ENCODE measurements at regions of chr7 and their contacts with region 1.

Region 1: GRCh38 chr7:92691578-92691977 is 101.4 kb upstream of the FAM133B start:
- DNase-seq: peak in 1 of 2 experiments; percentile 60
- H3K4me3 ChIP-seq: no peak overlapping the region
- H3K4me3 Mint-ChIP-seq: no peak overlapping the region
- H3K27ac Mint-ChIP-seq: peak overlapping the region; percentile 89
- H3K4me1 ChIP-seq: peaks cover 40% of the 10 kb centered on the region
- H3K4me1 Mint-ChIP-seq: peaks cover 20% of the 10 kb centered on the region
- H3K27me3 ChIP-seq: no peaks in the 10 kb centered on the region
- H3K27me3 Mint-ChIP-seq: no peaks in the 10 kb centered on the region
- CTCF ChIP-seq: peak; percentile 59 to 62

Region 2: GRCh38 chr7:92645114-92646061 is 46.2 kb before region 1 on chr7:
- CTCF ChIA-PET with region 1: interaction called, 5 read pairs
- POLR2A ChIA-PET with region 1: no interaction called
- intact Hi-C with region 1: loop called (anchors 1 kb)
- DNase-seq: peak; percentile 67 to 81
- H3K4me3 ChIP-seq: no peak overlapping the region
- H3K4me3 Mint-ChIP-seq: peak overlapping the region; percentile 47
- H3K27ac Mint-ChIP-seq: peak overlapping the region; percentile 27
- H3K4me1 ChIP-seq: peaks cover 38% of the 10 kb centered on the region
- H3K4me1 Mint-ChIP-seq: peaks cover 13% of the 10 kb centered on the region
- H3K27me3 ChIP-seq: no peaks in the 10 kb centered on the region
- H3K27me3 Mint-ChIP-seq: no peaks in the 10 kb centered on the region
- CTCF ChIP-seq: no peak

Region 3: GRCh38 chr7:92740700-92741126 is 49.1 kb after region 1 on chr7:
- CTCF ChIA-PET with region 1: no interaction called
- POLR2A ChIA-PET with region 1: no interaction called
- intact Hi-C with region 1: loop called (anchors 1 kb)
- DNase-seq: peak; percentile 73
- H3K4me3 ChIP-seq: no peak overlapping the region
- H3K4me3 Mint-ChIP-seq: peak overlapping the region; percentile 55
- H3K27ac Mint-ChIP-seq: peak overlapping the region; percentile 48
- H3K4me1 ChIP-seq: peaks cover 51% of the 10 kb centered on the region
- H3K4me1 Mint-ChIP-seq: peaks cover 59% of the 10 kb centered on the region
- H3K27me3 ChIP-seq: no peaks in the 10 kb centered on the region
- H3K27me3 Mint-ChIP-seq: no peaks in the 10 kb centered on the region
- CTCF ChIP-seq: no peak

Region 4: GRCh38 chr7:92833024-92833765 is 141.6 kb after region 1 on chr7:
- CTCF ChIA-PET with region 1: interaction called, 30 read pairs
- POLR2A ChIA-PET with region 1: interaction called, 17 read pairs
- intact Hi-C with region 1: loop called (anchors 1 kb)
- DNase-seq: peak; percentile 91 to 94
- H3K4me3 ChIP-seq: peak overlapping the region; percentile 79
- H3K4me3 Mint-ChIP-seq: peak overlapping the region; percentile 86
- H3K27ac Mint-ChIP-seq: peak overlapping the region; percentile 77
- H3K4me1 ChIP-seq: peaks cover 24% of the 10 kb centered on the region
- H3K4me1 Mint-ChIP-seq: peaks cover 18% of the 10 kb centered on the region
- H3K27me3 ChIP-seq: no peaks in the 10 kb centered on the region
- H3K27me3 Mint-ChIP-seq: no peaks in the 10 kb centered on the region
- CTCF ChIP-seq: peak; percentile 91 to 93

Region 5: DNA sequence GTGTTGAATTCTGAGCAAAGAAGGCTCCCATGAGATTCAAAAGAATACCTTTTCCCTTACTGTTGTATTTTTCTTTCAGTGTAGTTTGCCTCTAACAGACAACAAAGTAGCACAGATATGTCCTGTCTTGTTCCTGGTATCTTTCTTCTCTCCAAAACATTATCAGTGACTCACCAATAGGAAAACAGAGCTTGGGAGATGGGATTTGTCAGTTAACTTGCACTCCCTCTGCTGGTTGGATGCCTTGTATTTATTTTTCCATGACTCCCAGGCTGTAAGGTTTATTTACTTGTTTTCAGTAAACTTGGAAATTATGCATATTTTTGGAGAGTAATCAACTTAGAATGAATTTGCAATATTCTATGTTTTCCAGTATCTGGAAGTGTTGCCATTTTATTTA is 296.5 kb after region 1 on chr7:
- CTCF ChIA-PET with region 1: no interaction called
- POLR2A ChIA-PET with region 1: no interaction called
- intact Hi-C with region 1: loop called (anchors 2 kb)
- DNase-seq: peak in 1 of 2 experiments; percentile 55
- H3K4me3 ChIP-seq: no peak overlapping the region
- H3K4me3 Mint-ChIP-seq: no peak overlapping the region
- H3K27ac Mint-ChIP-seq: peak overlapping the region; percentile 32
- H3K4me1 ChIP-seq: 0 out of 2 replicates have a peak, but pooled peaks cover 10% of the 10 kb centered on the region
- H3K4me1 Mint-ChIP-seq: peaks cover 11% of the 10 kb centered on the region
- H3K27me3 ChIP-seq: no peaks in the 10 kb centered on the region
- H3K27me3 Mint-ChIP-seq: peaks cover 3% of the 10 kb centered on the region
- CTCF ChIP-seq: peak; percentile 39 to 53

Region 6: GRCh38 chr7:93203487-93203886 is 511.9 kb after region 1 on chr7:
- CTCF ChIA-PET with region 1: no interaction called
- POLR2A ChIA-PET with region 1: no interaction called
- intact Hi-C with region 1: loop called (anchors 5 kb)
- DNase-seq: peak; percentile 35 to 47
- H3K4me3 ChIP-seq: no peak overlapping the region
- H3K4me3 Mint-ChIP-seq: no peak overlapping the region
- H3K27ac Mint-ChIP-seq: peak overlapping the region; percentile 40
- H3K4me1 ChIP-seq: peaks cover 44% of the 10 kb centered on the region
- H3K4me1 Mint-ChIP-seq: peaks cover 22% of the 10 kb centered on the region
- H3K27me3 ChIP-seq: no peaks in the 10 kb centered on the region
- H3K27me3 Mint-ChIP-seq: no peaks in the 10 kb centered on the region
- CTCF ChIP-seq: no peak

Measured in Caco-2 (cell line).